ENCODE measurements at regions of chr6 and their contacts with region 1.

Region 1: DNA sequence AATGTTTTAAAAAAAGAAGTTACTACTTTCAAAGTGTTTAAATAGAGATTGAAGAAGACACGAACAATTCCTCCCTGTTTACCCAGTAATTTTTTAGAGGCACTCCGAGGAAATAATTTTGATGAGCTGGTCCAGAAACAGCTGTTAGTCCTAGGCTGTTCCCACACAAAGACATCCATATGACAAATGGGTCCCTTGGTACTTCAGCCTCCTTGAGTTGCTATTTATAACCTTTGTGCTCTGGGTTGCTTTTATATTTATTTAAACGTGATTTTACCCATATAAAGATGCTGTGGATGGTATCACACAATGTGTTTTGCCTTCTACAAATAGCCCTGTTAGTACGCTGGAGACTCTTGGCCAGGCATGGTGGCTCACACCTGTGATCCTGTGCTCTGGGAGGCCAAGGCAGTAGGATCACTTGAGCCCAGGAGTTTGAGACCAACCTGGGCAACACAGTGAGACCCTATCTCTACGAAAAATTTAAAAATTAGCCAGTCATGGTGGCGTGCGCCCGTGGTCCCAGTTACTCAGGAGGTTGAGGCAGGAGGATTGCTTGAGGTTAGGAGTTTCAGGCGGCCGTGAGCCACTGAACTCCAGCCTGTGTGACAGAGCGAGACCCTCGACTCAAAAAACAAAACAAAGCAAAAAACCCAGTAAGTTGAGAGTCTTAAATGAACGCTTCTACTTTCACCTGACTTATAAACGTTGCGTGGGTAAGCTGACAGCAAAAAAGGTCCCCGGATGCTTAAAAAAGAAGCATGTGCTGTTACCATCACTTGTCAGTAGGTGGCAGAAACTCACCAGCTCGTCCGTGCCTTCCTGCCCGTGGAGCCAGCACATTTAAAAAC is 56.9 kb upstream of the ARMH2 start:
- DNase-seq: peak; percentile 58
- ATAC-seq: peak; percentile 85
- H3K4me3 ChIP-seq: no peak overlapping the region
- H3K27ac ChIP-seq: no peak overlapping the region
- H3K4me1 ChIP-seq: peaks cover 32% of the 10 kb centered on the region
- H3K27me3 ChIP-seq: no peaks in the 10 kb centered on the region
- CTCF ChIP-seq: peak; percentile 78 to 90 (median 87)
- EP300 ChIP-seq: no peak
- POLR2A ChIP-seq: no peak
- RAD21 ChIP-seq: peak; percentile 98

Region 2: GRCh38 chr6:24283043-24283985 is 572.3 kb before region 1 on chr6:
- CTCF ChIA-PET with region 1: no interaction called
- POLR2A ChIA-PET with region 1: no interaction called
- RAD21 ChIA-PET with region 1: no interaction called
- SMC1A ChIA-PET with region 1: no interaction called
- in situ Hi-C with region 1: no loop called
- intact Hi-C with region 1: no loop called
- DNase-seq: peak; percentile 59
- ATAC-seq: peak; percentile 95
- H3K4me3 ChIP-seq: no peak overlapping the region
- H3K27ac ChIP-seq: no peak overlapping the region
- H3K4me1 ChIP-seq: peaks cover 5% of the 10 kb centered on the region; the same call in 1 of the 2 replicates
- H3K27me3 ChIP-seq: peaks cover 0 to 2% of the 10 kb centered on the region in 2 experiments; a peak in 1 of 4 replicates
- CTCF ChIP-seq: peak; percentile 44 to 57 (median 52)
- EP300 ChIP-seq: 0 out of 4 replicates have a peak, but pooled peaks of 1 of the 2 experiments have one; percentile 37
- POLR2A ChIP-seq: no peak
- RAD21 ChIP-seq: peak; percentile 76

Region 3: DNA sequence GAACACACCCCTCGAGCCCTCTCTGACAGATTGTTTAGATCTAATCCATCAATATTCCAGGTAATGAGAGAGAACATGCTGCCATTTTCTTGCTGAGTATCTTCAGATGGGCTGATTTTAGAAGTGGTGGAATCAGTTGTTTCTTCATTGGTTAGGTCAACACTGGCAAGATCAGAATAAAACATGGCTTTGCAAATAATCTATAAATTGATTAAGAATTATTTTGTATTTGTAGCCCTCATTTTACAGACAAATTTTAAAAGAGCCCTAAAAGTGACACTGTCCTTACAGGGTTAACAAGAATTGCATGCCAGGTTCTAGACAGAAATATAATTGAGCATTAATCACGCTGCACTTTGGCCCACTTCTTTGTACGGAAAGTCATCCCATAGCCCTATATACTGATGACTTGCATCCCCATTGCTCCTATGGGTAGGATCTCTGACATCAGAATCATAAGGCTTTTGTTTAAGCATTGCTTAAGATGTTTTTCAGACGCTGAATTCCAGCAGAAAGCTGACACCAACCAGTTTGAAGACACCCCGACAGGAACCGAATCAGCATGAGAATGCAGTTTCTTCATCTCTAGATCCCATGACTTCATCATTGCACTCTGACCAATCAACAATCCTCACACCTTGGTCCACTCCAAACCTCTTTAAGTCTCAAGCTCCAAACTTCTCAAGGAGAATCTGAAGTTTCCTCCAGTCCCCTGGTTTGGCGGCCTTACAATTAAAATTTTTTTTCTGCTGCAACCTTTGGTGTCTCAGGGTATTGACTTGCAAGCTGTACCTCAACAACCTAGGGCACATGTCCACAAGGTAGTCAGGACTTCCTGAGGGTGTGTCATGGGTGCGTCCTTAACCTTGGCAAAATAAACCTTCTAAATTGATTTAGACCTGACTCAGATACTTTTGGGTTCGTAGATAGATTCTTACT is 196.8 kb before region 1 on chr6:
- CTCF ChIA-PET with region 1: no interaction called
- POLR2A ChIA-PET with region 1: no interaction called
- RAD21 ChIA-PET with region 1: no interaction called
- SMC1A ChIA-PET with region 1: no interaction called
- in situ Hi-C with region 1: no loop called
- intact Hi-C with region 1: no loop called
- DNase-seq: no peak
- ATAC-seq: no peak
- H3K4me3 ChIP-seq: no peak overlapping the region
- H3K27ac ChIP-seq: no peak overlapping the region
- H3K4me1 ChIP-seq: no peaks in the 10 kb centered on the region
- H3K27me3 ChIP-seq: no peaks in the 10 kb centered on the region
- CTCF ChIP-seq: no peak
- EP300 ChIP-seq: no peak
- POLR2A ChIP-seq: no peak
- RAD21 ChIP-seq: no peak

Region 4: GRCh38 chr6:24910961-24911712 is 55.5 kb after region 1 on chr6:
- CTCF ChIA-PET with region 1: interaction called, 37 read pairs
- POLR2A ChIA-PET with region 1: interaction called, 4 read pairs
- RAD21 ChIA-PET with region 1: interaction called, 7 read pairs
- SMC1A ChIA-PET with region 1: interaction called, 13 read pairs
- in situ Hi-C with region 1: no loop called
- intact Hi-C with region 1: loop called (anchors 5 kb)
- DNase-seq: no peak
- ATAC-seq: peak; percentile 47
- H3K4me3 ChIP-seq: peak overlapping the region; percentile 86
- H3K27ac ChIP-seq: peak overlapping the region; percentile 60
- H3K4me1 ChIP-seq: peaks cover 26% of the 10 kb centered on the region
- H3K27me3 ChIP-seq: no peaks in the 10 kb centered on the region
- CTCF ChIP-seq: no peak
- EP300 ChIP-seq: no peak
- POLR2A ChIP-seq: no peak; the same call in 1 of the 2 replicates
- RAD21 ChIP-seq: no peak

Region 5: DNA sequence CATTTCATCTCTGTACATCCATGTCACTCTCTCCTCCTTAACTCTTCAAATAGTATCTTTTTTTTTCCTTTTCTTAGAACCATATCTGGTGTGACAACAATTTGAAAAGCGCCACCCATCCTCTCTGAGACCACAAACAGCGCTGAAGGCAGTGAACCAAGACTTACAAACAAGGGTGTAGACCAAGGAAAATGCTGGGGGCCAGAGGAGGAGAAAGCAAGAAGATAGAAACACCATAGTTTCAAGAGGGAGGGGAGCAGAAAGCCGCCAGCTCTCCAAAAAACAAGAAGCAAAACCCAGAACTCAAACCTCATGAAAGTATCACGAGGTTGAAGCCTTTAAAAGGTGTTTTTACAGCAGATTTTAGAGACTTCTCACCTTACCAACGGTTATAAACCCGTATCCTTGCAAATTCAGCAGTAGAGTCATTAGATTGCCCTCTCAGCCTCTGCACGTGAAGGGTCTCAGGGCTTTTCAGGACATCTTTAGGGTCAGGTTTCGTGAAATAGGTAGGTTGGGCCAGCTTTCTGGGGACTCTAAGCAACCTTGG is 93.5 kb after region 1 on chr6:
- CTCF ChIA-PET with region 1: interaction called, 10 read pairs
- POLR2A ChIA-PET with region 1: no interaction called
- RAD21 ChIA-PET with region 1: interaction called, 6 read pairs
- SMC1A ChIA-PET with region 1: interaction called, 3 read pairs
- in situ Hi-C with region 1: no loop called
- intact Hi-C with region 1: no loop called
- DNase-seq: peak; percentile 96
- ATAC-seq: peak; percentile 96
- H3K4me3 ChIP-seq: peak overlapping the region; percentile 28; the same call in 1 of the 2 replicates
- H3K27ac ChIP-seq: peak overlapping the region; percentile 84
- H3K4me1 ChIP-seq: peaks cover 46% of the 10 kb centered on the region
- H3K27me3 ChIP-seq: no peaks in the 10 kb centered on the region
- CTCF ChIP-seq: no peak
- EP300 ChIP-seq: peak; percentile 78 to 85; a peak in 2 of 4 replicates
- POLR2A ChIP-seq: no peak
- RAD21 ChIP-seq: peak; percentile 9; the same call in 1 of the 2 replicates

Region 6: GRCh38 chr6:25006565-25007001 is 151.0 kb after region 1 on chr6:
- CTCF ChIA-PET with region 1: interaction called, 314 read pairs
- POLR2A ChIA-PET with region 1: no interaction called
- RAD21 ChIA-PET with region 1: interaction called, 6 read pairs
- SMC1A ChIA-PET with region 1: interaction called, 16 read pairs
- in situ Hi-C with region 1: no loop called
- intact Hi-C with region 1: no loop called
- DNase-seq: no peak
- ATAC-seq: peak; percentile 72
- H3K4me3 ChIP-seq: 0 out of 2 replicates have a peak overlapping the region, but pooled peaks have one; percentile 28
- H3K27ac ChIP-seq: peak overlapping the region; percentile 46; the same call in 1 of the 2 replicates
- H3K4me1 ChIP-seq: peaks cover 14% of the 10 kb centered on the region
- H3K27me3 ChIP-seq: no peaks in the 10 kb centered on the region
- CTCF ChIP-seq: no peak
- EP300 ChIP-seq: peak in 1 of 2 experiments; percentile 44; a peak in 1 of 4 replicates
- POLR2A ChIP-seq: no peak
- RAD21 ChIP-seq: no peak

Region 7: DNA sequence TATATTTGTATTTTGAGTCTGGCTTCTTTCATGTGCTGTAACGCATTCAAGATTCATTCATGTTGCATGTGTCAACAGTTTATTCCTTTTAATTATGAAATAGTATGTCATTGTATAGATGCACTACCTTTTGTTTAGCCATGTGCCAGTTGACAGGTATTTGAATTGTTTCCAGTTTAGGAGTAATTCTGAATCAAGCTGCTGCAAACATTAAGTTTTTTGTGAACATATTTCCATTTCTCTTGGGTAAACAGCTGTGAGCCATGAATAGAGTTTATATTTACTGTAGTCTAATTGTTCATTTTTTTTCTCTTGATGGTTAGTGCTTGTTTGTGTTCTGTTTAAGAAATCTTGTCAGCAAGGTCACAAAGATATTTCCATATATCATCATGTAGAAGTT is 222.5 kb after region 1 on chr6:
- CTCF ChIA-PET with region 1: no interaction called
- POLR2A ChIA-PET with region 1: no interaction called
- RAD21 ChIA-PET with region 1: no interaction called
- SMC1A ChIA-PET with region 1: interaction called, 4 read pairs
- in situ Hi-C with region 1: loop called (anchors 5 kb)
- intact Hi-C with region 1: no loop called
- DNase-seq: no peak
- ATAC-seq: no peak
- H3K4me3 ChIP-seq: no peak overlapping the region
- H3K27ac ChIP-seq: no peak overlapping the region
- H3K4me1 ChIP-seq: no peaks in the 10 kb centered on the region
- H3K27me3 ChIP-seq: no peaks in the 10 kb centered on the region
- CTCF ChIP-seq: no peak
- EP300 ChIP-seq: no peak
- POLR2A ChIP-seq: no peak
- RAD21 ChIP-seq: no peak